Activated T-helper 1 cell treated with anti-CD3 and anti-CD28 coated beads, Interleukin-12 subunit alpha, Interleukin-12 subunit beta, Interleukin-2, Interleukin-4 antibody, amounts not matched to agents 30 ng/mL and 10 ng/mL and 1 ng/mL, durations not matched to agents 14 hours and 24 hours and 36 hours (primary cell): ENCODE measurements at regions of chr14 and their contacts with region 1.

Region 1: GRCh38 chr14:92768795-92769194 is 20.4 kb upstream of the LGMN start:
- DNase-seq: no peak
- H3K4me3 Mint-ChIP-seq: no peak overlapping the region
- H3K27ac Mint-ChIP-seq: no peak overlapping the region
- H3K4me1 Mint-ChIP-seq: peaks cover 44% of the 10 kb centered on the region
- H3K27me3 Mint-ChIP-seq: peaks cover 37% of the 10 kb centered on the region

Region 2: GRCh38 chr14:92556255-92556741 is 212.5 kb before region 1 on chr14:
- intact Hi-C with region 1: loop called (anchors 1 kb)
- DNase-seq: no peak
- H3K4me3 Mint-ChIP-seq: peak overlapping the region; percentile 28
- H3K27ac Mint-ChIP-seq: peak overlapping the region; percentile 92
- H3K4me1 Mint-ChIP-seq: peaks cover 71% of the 10 kb centered on the region
- H3K27me3 Mint-ChIP-seq: no peaks in the 10 kb centered on the region

Region 3: GRCh38 chr14:92585981-92586937 is 182.5 kb before region 1 on chr14:
- intact Hi-C with region 1: loop called (anchors 1 kb)
- DNase-seq: peak; percentile 36
- H3K4me3 Mint-ChIP-seq: peak overlapping the region; percentile 67
- H3K27ac Mint-ChIP-seq: peak overlapping the region; percentile 82
- H3K4me1 Mint-ChIP-seq: peaks cover 83% of the 10 kb centered on the region
- H3K27me3 Mint-ChIP-seq: peaks cover 2% of the 10 kb centered on the region

Region 4: GRCh38 chr14:92748259-92749016 is 20.4 kb before region 1 on chr14 and contains the start of gene LGMN:
- intact Hi-C with region 1: loop called (anchors 1 kb)
- DNase-seq: peak; percentile 68
- H3K4me3 Mint-ChIP-seq: peak within 1 kb of the TSS; percentile 64
- H3K27ac Mint-ChIP-seq: peak within 1 kb of the TSS; percentile 18
- H3K4me1 Mint-ChIP-seq: peaks cover 31% of the 10 kb centered on the region
- H3K27me3 Mint-ChIP-seq: peaks cover 68% of the 10 kb centered on the region
- total RNA-seq, gene LGMN: 1.3 and 2.2 TPM in 2 replicates

Region 5: GRCh38 chr14:92793709-92794546 is 25.1 kb after region 1 on chr14 and contains the start of gene GOLGA5:
- intact Hi-C with region 1: loop called (anchors 1 kb)
- DNase-seq: peak; percentile 98
- H3K4me3 Mint-ChIP-seq: peak within 1 kb of the TSS; percentile 99
- H3K27ac Mint-ChIP-seq: peak within 1 kb of the TSS; percentile 98
- H3K4me1 Mint-ChIP-seq: peaks cover 30% of the 10 kb centered on the region
- H3K27me3 Mint-ChIP-seq: no peaks in the 10 kb centered on the region
- total RNA-seq, gene GOLGA5: 22.2 and 22.6 TPM in 2 replicates